Left cardiac atrium (tissue), 4 donors: ENCODE measurements at regions of chr9 and their contacts with region 1.

Region 1: DNA sequence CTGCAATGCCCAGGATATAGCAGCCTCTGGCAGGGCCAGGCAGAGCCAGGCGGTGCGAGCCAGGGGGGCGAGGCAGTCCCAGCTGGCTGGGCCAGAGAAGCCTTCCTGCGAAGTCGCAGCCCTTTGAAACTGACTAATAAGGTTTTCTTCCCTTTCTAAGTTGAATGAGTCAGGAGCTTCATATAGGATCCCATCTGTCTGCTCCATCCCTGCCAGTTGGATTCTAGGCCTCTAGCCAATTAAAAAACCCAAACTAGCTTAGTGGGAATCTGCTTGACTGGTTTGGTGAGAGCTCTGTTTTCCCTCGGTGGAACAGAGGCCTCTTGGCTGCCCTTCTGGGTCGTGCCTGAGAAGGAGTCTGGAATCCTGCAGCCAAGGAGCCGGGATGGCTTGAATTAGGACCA is 70.1 kb upstream of the RAPGEF1 start:
- DNase-seq: no peak
- ATAC-seq: no peak

Region 2: DNA sequence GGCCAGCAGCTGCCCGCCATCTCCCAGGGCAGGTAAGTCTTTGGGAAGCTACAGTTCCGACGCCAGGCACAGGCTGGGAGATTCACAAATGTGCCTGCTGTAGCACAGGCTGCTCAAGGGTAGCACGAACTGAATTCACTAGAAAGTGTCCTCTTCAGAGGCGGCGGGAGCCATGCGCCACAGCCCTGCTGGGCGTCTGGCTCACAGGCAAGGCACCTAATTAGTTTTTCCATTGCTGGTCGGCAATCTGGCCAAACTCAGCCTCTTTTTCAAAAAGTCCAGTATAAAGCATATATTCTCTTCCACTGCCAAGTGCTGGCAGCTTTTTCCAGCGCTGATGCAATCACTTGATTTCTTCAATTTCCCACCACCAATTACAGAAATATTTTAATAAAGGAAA is 58.8 kb after region 1 on chr9:
- intact Hi-C with region 1: loop called in 1 of 2 experiments (anchors 10 kb)
- DNase-seq: no peak
- ATAC-seq: peak in 1 of 2 donors; percentile 35

Region 3: GRCh38 chr9:132154863-132155309 is 344.9 kb after region 1 on chr9:
- intact Hi-C with region 1: no loop called
- DNase-seq: no peak
- ATAC-seq: no peak

Region 4: DNA sequence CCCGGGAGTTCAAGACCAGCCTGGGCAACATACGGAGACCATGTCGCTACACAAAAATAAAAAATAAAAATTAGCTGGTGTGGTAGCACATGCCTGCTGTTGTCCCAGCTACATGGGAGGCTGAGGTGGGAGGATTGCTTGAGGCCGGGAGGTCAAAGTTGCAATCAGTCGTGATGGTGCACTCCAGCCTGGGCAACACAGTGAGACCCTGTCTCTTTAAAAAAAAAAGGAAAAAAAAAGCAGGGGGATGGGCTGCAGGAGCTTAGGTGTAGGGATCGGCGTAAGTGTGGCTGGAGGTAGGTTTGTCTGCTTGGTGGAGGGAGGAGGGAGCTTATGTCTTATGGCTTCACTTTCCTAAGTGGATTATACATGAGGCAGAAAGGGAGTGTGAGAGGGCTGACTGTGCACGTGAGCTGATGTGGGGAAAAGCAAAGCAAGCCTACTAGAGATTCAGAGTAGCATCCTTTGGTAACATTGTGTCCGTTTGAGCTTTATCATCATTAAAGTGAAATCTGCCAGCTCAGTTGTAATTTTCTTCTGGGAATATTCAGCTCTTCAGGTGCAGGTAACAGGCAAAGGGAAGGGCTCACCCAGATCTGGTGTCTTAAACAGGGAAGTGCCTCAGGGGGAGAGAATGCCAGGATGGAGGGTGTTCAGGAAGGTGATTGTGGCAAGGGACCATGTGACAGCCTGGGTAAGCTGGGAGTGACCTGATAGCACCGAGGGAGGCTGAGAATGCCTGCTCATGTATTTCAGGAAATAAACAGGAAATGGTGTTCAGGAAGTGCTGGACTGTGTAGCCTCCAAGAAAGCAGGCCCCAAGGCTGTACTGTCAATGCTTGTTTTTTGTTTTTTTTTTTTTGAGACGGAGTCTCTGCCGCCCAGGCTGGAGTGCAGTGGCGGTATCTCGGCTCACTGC is 562.5 kb after region 1 on chr9:
- intact Hi-C with region 1: no loop called
- DNase-seq: peak; percentile 70
- ATAC-seq: peak; percentile 93 to 95